Heart right ventricle (tissue), 16 donors: ENCODE measurements at regions of chr18 and their contacts with region 1.

Region 1: GRCh38 chr18:47846431-47846830 is 84.0 kb downstream of the SMAD2 start:
- DNase-seq: no peak
- ATAC-seq: no peak
- H3K4me3 ChIP-seq: no peak overlapping the region
- H3K27ac ChIP-seq: no peak overlapping the region
- H3K4me1 ChIP-seq: peaks cover 0 to 10% (median 0%) of the 10 kb centered on the region in 9 donors
- H3K27me3 ChIP-seq: no peaks in the 10 kb centered on the region
- CTCF ChIP-seq: no peak

Region 2: DNA sequence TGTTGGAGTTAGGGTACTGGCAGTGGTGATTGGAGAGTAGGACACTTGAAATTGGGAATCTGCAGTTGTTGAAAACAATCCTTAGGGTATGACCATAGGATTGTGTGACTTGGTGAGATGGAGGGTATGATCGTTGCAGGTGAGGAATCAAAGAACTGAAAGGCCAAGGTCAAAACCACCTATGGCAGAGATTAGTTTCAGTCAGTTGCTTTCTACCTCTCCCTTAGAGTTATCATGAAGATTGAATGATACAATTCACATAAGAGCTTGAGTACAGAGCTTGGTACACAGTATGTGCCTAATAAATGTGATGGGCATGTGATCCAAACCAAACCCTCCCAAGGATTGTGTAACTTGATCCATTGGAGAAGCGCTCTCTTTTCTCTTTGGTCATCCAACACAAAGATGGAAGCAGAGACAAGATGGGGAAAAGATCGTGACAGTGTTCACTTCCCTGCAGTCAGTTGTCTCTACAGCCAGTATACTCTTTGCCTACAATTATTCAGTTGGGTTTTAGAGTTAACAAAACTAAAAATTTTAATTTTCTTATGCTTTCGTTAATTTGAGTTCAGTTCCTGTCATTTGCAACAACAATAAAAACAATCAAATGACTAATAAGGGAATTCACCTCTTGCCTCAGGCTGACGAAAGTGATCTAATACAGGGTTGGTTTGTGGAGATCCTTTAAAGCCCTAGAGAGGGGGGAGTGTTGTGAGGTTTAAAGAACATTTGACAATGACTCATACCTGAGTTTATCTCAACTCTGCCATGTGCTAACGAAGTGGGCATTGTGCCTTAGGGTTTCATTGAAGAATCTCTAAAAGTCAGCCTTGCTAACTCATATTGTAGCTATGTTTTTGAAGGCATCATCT is 98.8 kb after region 1 on chr18:
- intact Hi-C with region 1: no loop called
- DNase-seq: no peak
- ATAC-seq: peak in 1 of 8 donors; percentile 60
- H3K4me3 ChIP-seq: no peak overlapping the region
- H3K27ac ChIP-seq: no peak overlapping the region
- H3K4me1 ChIP-seq: peaks cover 0 to 11% (median 3%) of the 10 kb centered on the region in 9 donors
- H3K27me3 ChIP-seq: no peaks in the 10 kb centered on the region
- CTCF ChIP-seq: no peak

Region 3: GRCh38 chr18:48007955-48008701 is 161.7 kb after region 1 on chr18:
- intact Hi-C with region 1: loop called in 1 of 10 experiments (anchors 10 kb)
- DNase-seq: peak; percentile 68 to 69
- ATAC-seq: peak; percentile 60 to 90 (median 85)
- H3K4me3 ChIP-seq: peak overlapping the region; percentile 22 to 68 (median 60)
- H3K27ac ChIP-seq: peak overlapping the region in 5 of 10 donors; percentile 30 to 68 (median 48)
- H3K4me1 ChIP-seq: peaks cover 0 to 27% (median 20%) of the 10 kb centered on the region in 9 donors
- H3K27me3 ChIP-seq: peaks cover 0 to 8% (median 0%) of the 10 kb centered on the region in 7 donors
- CTCF ChIP-seq: peak; percentile 59 to 94 (median 73)